Esophagus muscularis mucosa (tissue), 4 donors: ENCODE measurements at regions of chr7 and their contacts with region 1.

Region 1: DNA sequence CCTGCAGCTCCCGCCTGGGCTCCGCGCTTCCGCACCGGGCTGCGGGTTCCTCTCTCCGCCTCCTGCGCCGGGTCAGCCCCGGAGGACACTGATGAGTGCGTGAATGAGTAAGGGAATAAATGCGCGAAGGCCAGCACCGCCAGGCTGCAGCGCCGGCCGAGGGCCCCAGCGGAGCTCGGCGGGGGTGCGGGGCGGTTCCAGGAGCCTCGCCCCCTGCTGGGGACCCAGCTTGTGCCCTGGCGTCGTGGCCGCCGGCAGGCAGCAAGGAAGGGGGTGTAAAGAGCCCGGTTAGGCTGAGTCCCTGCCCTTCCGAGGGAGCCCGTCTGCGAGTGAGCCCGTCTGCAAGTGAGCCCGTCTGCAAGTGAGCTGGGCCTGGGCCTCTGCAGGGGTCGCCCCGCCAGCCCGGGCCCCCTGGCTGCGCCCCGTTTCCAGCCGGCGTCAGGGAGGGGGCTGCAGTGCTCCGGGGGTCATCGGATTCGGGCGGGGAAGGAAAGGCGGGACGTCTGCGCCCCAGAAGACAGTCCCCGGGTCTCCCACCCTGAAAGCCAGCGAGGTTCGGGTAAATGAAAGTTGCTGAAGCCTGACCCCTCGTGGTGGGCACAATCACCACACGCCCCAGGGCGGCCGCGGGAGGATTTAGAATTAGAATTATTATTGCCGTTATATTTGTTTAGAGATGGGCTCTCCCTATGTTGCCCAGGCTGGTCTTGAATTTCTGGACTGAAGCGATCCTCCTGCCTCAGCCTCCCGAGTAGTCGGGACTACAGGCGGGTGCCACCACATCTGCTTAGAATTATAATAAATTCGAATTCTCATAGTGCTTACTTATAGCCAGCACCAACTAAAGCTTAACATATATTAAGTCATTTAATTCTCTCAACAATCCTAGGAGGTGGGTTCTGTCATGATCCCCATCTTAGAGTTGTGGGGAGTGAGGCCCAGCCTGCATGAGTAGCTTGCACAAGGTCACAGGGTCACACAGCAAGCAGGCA is 8.6 kb upstream of the CRYGN start:
- DNase-seq: peak; percentile 96
- H3K4me3 ChIP-seq: peak overlapping the region; percentile 57 to 70 (median 63)
- H3K27ac ChIP-seq: peak overlapping the region; percentile 70 to 78 (median 74)
- H3K4me1 ChIP-seq: peaks cover 6 to 14% (median 12%) of the 10 kb centered on the region in 4 donors
- H3K27me3 ChIP-seq: no peaks in the 10 kb centered on the region
- CTCF ChIP-seq: peak; percentile 81 to 83 (median 82)
- EP300 ChIP-seq: no peak
- POLR2A ChIP-seq: no peak

Region 2: DNA sequence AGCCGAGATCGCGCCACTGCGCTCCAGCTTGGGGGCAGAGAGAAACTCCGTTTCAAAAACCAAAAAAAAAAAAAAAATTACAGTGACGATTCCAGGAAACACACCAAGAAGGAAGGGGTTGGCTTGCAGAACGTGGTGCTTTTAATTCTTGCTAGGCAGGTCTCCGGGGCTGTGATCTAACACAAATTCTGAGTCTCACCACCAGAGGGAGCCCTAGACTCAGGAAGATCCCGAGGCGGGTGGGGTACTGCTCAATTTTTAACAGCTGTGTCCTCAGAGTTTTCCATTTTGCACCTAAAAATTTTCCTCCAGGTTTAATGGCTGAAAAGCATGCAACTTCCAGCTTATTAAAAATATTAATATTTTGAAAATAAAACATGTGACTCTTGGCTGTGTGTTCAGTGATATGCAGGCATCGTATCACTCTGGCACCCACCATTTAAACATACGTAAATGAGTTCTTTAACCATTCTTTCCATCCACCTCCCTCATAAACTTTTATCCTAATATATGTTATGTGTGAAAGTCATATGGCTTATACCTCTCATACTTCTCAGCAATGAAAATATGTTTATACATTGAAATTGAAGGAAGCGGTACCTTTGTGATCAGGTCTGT is 133.4 kb before region 1 on chr7:
- intact Hi-C with region 1: loop called (anchors 5 kb)
- DNase-seq: peak; percentile 96
- H3K4me3 ChIP-seq: no peak overlapping the region
- H3K27ac ChIP-seq: no peak overlapping the region
- H3K4me1 ChIP-seq: peaks cover 3 to 16% (median 15%) of the 10 kb centered on the region in 4 donors
- H3K27me3 ChIP-seq: no peaks in the 10 kb centered on the region
- CTCF ChIP-seq: peak; percentile 82 to 84 (median 83)
- EP300 ChIP-seq: no peak
- POLR2A ChIP-seq: no peak

Region 3: GRCh38 chr7:151336027-151336708 is 112.4 kb before region 1 on chr7:
- intact Hi-C with region 1: no loop called
- DNase-seq: peak; percentile 31
- H3K4me3 ChIP-seq: no peak overlapping the region
- H3K27ac ChIP-seq: no peak overlapping the region
- H3K4me1 ChIP-seq: peaks cover 1 to 8% (median 2%) of the 10 kb centered on the region in 4 donors
- H3K27me3 ChIP-seq: no peaks in the 10 kb centered on the region
- CTCF ChIP-seq: no peak
- EP300 ChIP-seq: no peak
- POLR2A ChIP-seq: no peak

Region 4: GRCh38 chr7:151368136-151368571 is 80.4 kb before region 1 on chr7:
- intact Hi-C with region 1: loop called (anchors 1 kb)
- DNase-seq: peak; percentile 96
- H3K4me3 ChIP-seq: no peak overlapping the region
- H3K27ac ChIP-seq: peak overlapping the region; percentile 71 to 85 (median 78)
- H3K4me1 ChIP-seq: peaks cover 12 to 34% (median 33%) of the 10 kb centered on the region in 4 donors
- H3K27me3 ChIP-seq: no peaks in the 10 kb centered on the region
- CTCF ChIP-seq: peak; percentile 94 to 100 (median 97)
- EP300 ChIP-seq: no peak
- POLR2A ChIP-seq: no peak